B cell (primary cell): ENCODE measurements at regions of chr5 and their contacts with region 1.

Region 1: DNA sequence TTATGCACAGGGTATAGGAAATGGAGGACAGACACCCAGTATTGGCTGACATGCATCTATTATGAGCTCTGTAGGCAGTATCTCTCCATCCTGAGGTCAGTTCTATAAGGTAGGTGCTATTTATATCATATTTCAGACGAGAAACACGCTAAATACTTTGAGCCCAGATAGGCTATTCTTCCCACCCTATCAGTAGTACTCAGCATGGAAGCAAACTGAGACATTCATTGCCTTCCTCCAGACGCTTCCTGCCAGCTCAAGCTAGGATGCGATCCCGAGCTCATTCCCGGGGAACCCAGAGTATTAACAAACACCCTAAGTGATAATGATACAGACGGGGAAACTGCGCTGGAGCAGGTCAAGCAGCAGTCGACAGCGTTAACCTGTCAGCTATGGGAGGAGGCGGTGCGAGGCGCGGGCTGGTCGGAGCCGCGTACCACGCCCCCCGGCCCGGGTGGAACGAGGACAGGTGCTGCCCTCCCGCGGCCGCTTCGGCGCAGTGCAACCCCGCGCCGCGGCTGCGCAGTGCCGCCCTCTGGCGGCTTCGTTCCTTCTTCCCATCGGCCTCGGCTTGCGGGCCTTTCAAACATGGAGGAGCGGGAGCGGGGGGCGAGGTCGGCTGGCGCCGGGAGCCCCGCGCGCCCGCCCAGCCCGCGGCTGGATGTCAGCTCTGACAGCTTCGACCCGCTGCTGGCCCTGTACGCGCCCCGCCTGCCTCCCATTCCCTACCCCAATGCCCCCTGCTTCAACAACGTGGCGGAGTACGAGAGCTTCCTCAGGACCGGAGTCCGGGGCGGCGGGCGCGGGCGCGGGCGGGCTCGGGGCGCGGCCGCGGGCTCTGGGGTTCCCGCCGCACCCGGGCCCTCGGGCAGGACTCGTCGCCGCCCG is at the start of gene LSM11:
- DNase-seq: peak; percentile 95
- ATAC-seq: peak; percentile 96
- H3K4me3 ChIP-seq: peak within 1 kb of the TSS; percentile 42 to 81 (median 70)
- H3K4me3 Mint-ChIP-seq: peak within 1 kb of the TSS; percentile 94
- H3K27ac ChIP-seq: peak within 1 kb of the TSS in 1 of 2 donors; percentile 29
- H3K27ac Mint-ChIP-seq: peak within 1 kb of the TSS; percentile 87
- H3K4me1 ChIP-seq: peaks cover 12 to 13% of the 10 kb centered on the region in 2 donors
- H3K4me1 Mint-ChIP-seq: peaks cover 24% of the 10 kb centered on the region
- H3K27me3 ChIP-seq: no peaks in the 10 kb centered on the region
- H3K27me3 Mint-ChIP-seq: no peaks in the 10 kb centered on the region
- CTCF ChIP-seq: peak; percentile 99
- total RNA-seq, gene LSM11: 4.2 and 4.3 TPM in 2 replicates

Region 2: GRCh38 chr5:157189223-157189622 is 554.2 kb before region 1 on chr5:
- CTCF ChIA-PET with region 1: no interaction called
- POLR2A ChIA-PET with region 1: no interaction called
- intact Hi-C with region 1: no loop called
- DNase-seq: no peak
- ATAC-seq: no peak
- H3K4me3 ChIP-seq: no peak overlapping the region
- H3K4me3 Mint-ChIP-seq: no peak overlapping the region
- H3K27ac ChIP-seq: no peak overlapping the region
- H3K27ac Mint-ChIP-seq: no peak overlapping the region
- H3K4me1 ChIP-seq: no peaks in the 10 kb centered on the region
- H3K4me1 Mint-ChIP-seq: no peaks in the 10 kb centered on the region
- H3K27me3 ChIP-seq: no peaks in the 10 kb centered on the region
- H3K27me3 Mint-ChIP-seq: no peaks in the 10 kb centered on the region
- CTCF ChIP-seq: no peak

Region 3: GRCh38 chr5:157342822-157343402 is 400.5 kb before region 1 on chr5:
- CTCF ChIA-PET with region 1: interaction called, 31 read pairs
- POLR2A ChIA-PET with region 1: no interaction called
- intact Hi-C with region 1: loop called (anchors 1 kb)
- DNase-seq: peak; percentile 52
- ATAC-seq: peak; percentile 49
- H3K4me3 ChIP-seq: no peak overlapping the region
- H3K4me3 Mint-ChIP-seq: no peak overlapping the region
- H3K27ac ChIP-seq: no peak overlapping the region
- H3K27ac Mint-ChIP-seq: no peak overlapping the region
- H3K4me1 ChIP-seq: no peaks in the 10 kb centered on the region
- H3K4me1 Mint-ChIP-seq: no peaks in the 10 kb centered on the region
- H3K27me3 ChIP-seq: no peaks in the 10 kb centered on the region
- H3K27me3 Mint-ChIP-seq: no peaks in the 10 kb centered on the region
- CTCF ChIP-seq: peak; percentile 70

Region 4: GRCh38 chr5:157449011-157449723 is 294.2 kb before region 1 on chr5:
- CTCF ChIA-PET with region 1: interaction called, 11 read pairs
- POLR2A ChIA-PET with region 1: no interaction called
- intact Hi-C with region 1: no loop called
- DNase-seq: no peak
- ATAC-seq: no peak
- H3K4me3 ChIP-seq: no peak overlapping the region
- H3K4me3 Mint-ChIP-seq: no peak overlapping the region
- H3K27ac ChIP-seq: no peak overlapping the region
- H3K27ac Mint-ChIP-seq: no peak overlapping the region
- H3K4me1 ChIP-seq: peaks cover 0 to 9% of the 10 kb centered on the region in 2 donors
- H3K4me1 Mint-ChIP-seq: peaks cover 6% of the 10 kb centered on the region
- H3K27me3 ChIP-seq: no peaks in the 10 kb centered on the region
- H3K27me3 Mint-ChIP-seq: no peaks in the 10 kb centered on the region
- CTCF ChIP-seq: no peak

Region 5: GRCh38 chr5:157502143-157502647 is 241.2 kb before region 1 on chr5:
- CTCF ChIA-PET with region 1: interaction called, 6 read pairs
- POLR2A ChIA-PET with region 1: no interaction called
- intact Hi-C with region 1: loop called (anchors 5 kb)
- DNase-seq: peak; percentile 87
- ATAC-seq: peak; percentile 76
- H3K4me3 ChIP-seq: no peak overlapping the region
- H3K4me3 Mint-ChIP-seq: peak overlapping the region; percentile 16
- H3K27ac ChIP-seq: peak overlapping the region; percentile 83 to 98
- H3K27ac Mint-ChIP-seq: peak overlapping the region; percentile 95
- H3K4me1 ChIP-seq: peaks cover 84 to 91% of the 10 kb centered on the region in 2 donors
- H3K4me1 Mint-ChIP-seq: peaks cover 87% of the 10 kb centered on the region
- H3K27me3 ChIP-seq: no peaks in the 10 kb centered on the region
- H3K27me3 Mint-ChIP-seq: no peaks in the 10 kb centered on the region
- CTCF ChIP-seq: no peak

Region 6: GRCh38 chr5:157575381-157576020 is 167.9 kb before region 1 on chr5 and contains the start of gene ADAM19:
- CTCF ChIA-PET with region 1: interaction called, 10 read pairs
- POLR2A ChIA-PET with region 1: interaction called, 3 read pairs
- intact Hi-C with region 1: no loop called
- DNase-seq: peak; percentile 67
- ATAC-seq: peak; percentile 47
- H3K4me3 ChIP-seq: peak within 1 kb of the TSS; percentile 94 to 99 (median 99)
- H3K4me3 Mint-ChIP-seq: peak within 1 kb of the TSS; percentile 96
- H3K27ac ChIP-seq: peak within 1 kb of the TSS; percentile 79 to 84
- H3K27ac Mint-ChIP-seq: peak within 1 kb of the TSS; percentile 95
- H3K4me1 ChIP-seq: peaks cover 44 to 65% of the 10 kb centered on the region in 2 donors
- H3K4me1 Mint-ChIP-seq: peaks cover 70% of the 10 kb centered on the region
- H3K27me3 ChIP-seq: no peaks in the 10 kb centered on the region
- H3K27me3 Mint-ChIP-seq: no peaks in the 10 kb centered on the region
- CTCF ChIP-seq: peak; percentile 18
- total RNA-seq, gene ADAM19: 171 TPM in 2 replicates

Region 7: GRCh38 chr5:157670662-157671591 is 72.5 kb before region 1 on chr5 and contains the start of gene C5orf52:
- CTCF ChIA-PET with region 1: interaction called, 100 read pairs
- POLR2A ChIA-PET with region 1: no interaction called
- intact Hi-C with region 1: loop called (anchors 1 kb)
- DNase-seq: peak; percentile 49
- ATAC-seq: peak; percentile 51
- H3K4me3 ChIP-seq: peak within 1 kb of the TSS; percentile 52 to 76 (median 72)
- H3K4me3 Mint-ChIP-seq: peak within 1 kb of the TSS; percentile 98
- H3K27ac ChIP-seq: peak within 1 kb of the TSS in 1 of 2 donors; percentile 17
- H3K27ac Mint-ChIP-seq: peak within 1 kb of the TSS; percentile 83
- H3K4me1 ChIP-seq: peaks cover 13 to 29% of the 10 kb centered on the region in 2 donors
- H3K4me1 Mint-ChIP-seq: peaks cover 29% of the 10 kb centered on the region
- H3K27me3 ChIP-seq: no peaks in the 10 kb centered on the region
- H3K27me3 Mint-ChIP-seq: no peaks in the 10 kb centered on the region
- CTCF ChIP-seq: no peak
- total RNA-seq, gene C5orf52: not detected in 2 replicates

Region 8: GRCh38 chr5:157731272-157732129 is 11.9 kb before region 1 on chr5 and contains the start of gene THG1L:
- CTCF ChIA-PET with region 1: interaction called, 46 read pairs
- POLR2A ChIA-PET with region 1: interaction called, 6 read pairs
- intact Hi-C with region 1: loop called (anchors 1 kb)
- DNase-seq: peak; percentile 93
- ATAC-seq: peak; percentile 84
- H3K4me3 ChIP-seq: peak within 1 kb of the TSS; percentile 67 to 94 (median 93)
- H3K4me3 Mint-ChIP-seq: peak within 1 kb of the TSS; percentile 98
- H3K27ac ChIP-seq: peak within 1 kb of the TSS; percentile 92 to 94
- H3K27ac Mint-ChIP-seq: peak within 1 kb of the TSS; percentile 99
- H3K4me1 ChIP-seq: peaks cover 21 to 26% of the 10 kb centered on the region in 2 donors
- H3K4me1 Mint-ChIP-seq: peaks cover 30% of the 10 kb centered on the region
- H3K27me3 ChIP-seq: no peaks in the 10 kb centered on the region
- H3K27me3 Mint-ChIP-seq: no peaks in the 10 kb centered on the region
- CTCF ChIP-seq: no peak
- total RNA-seq, gene THG1L: 14.1 and 14.6 TPM in 2 replicates